Endothelial cell of umbilical vein (primary cell): ENCODE measurements at regions of chr4 and their contacts with region 1.

Region 1: GRCh38 chr4:51842554-51843308 is at the start of gene DCUN1D4:
- DNase-seq: peak; percentile 100
- H3K4me3 ChIP-seq: peak within 1 kb of the TSS; percentile 61 to 91 (median 84)
- H3K27ac ChIP-seq: peak within 1 kb of the TSS; percentile 22
- H3K4me1 ChIP-seq: peaks cover 9% of the 10 kb centered on the region
- H3K27me3 ChIP-seq: no peaks in the 10 kb centered on the region
- CTCF ChIP-seq: peak in 1 of 2 donors; percentile 43
- POLR2A ChIP-seq: no peak
- total RNA-seq, gene DCUN1D4: 50.2 and 50.6 TPM in 2 replicates

Region 2: DNA sequence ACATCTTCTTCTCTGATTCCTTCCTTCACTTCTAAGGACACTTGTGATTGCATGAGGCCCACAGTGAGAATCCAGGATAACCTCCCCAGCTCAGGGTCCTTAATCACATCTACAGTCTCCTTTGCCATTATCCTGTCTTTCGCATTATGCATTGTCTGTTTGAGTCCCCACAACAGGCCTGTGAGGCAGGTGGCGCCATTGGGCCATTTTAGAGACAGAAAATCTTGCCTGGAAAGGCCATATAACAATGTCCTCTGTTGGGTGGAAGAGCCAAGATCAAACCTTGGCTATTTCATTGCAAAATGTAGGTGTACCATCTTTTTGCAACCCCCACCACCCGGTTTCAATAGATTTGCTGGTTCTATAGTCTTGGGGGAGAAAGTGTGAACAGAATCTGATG is 11.6 kb before region 1 on chr4:
- CTCF ChIA-PET with region 1: interaction called, 13 read pairs
- POLR2A ChIA-PET with region 1: no interaction called
- dilution Hi-C with region 1: no loop called
- intact Hi-C with region 1: no loop called
- DNase-seq: peak; percentile 60
- H3K4me3 ChIP-seq: no peak overlapping the region
- H3K27ac ChIP-seq: no peak overlapping the region
- H3K4me1 ChIP-seq: no peaks in the 10 kb centered on the region
- H3K27me3 ChIP-seq: peaks cover 13% of the 10 kb centered on the region in 2 experiments
- CTCF ChIP-seq: peak; percentile 54 to 62
- POLR2A ChIP-seq: no peak

Region 3: DNA sequence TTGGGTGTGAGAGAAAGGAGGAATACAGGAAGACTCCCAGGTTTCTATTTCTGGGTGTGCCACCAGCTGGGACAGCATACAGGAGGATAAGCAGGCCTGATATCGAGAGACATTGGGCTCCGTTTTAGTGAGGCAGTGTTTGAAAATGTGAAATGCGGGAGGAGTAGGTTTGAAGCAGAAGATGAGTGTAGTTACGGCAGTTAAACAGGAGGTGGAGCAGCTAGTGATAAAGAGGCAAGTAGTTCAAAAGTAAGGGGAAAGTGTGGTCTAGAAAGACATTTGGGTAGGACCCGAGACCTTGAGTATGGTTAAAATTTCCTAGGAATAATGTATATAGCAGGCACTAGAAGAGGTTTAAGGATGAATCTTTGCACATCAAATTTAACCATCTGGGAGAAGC is 42.6 kb after region 1 on chr4:
- CTCF ChIA-PET with region 1: interaction called, 12 read pairs
- POLR2A ChIA-PET with region 1: no interaction called
- dilution Hi-C with region 1: no loop called
- intact Hi-C with region 1: no loop called
- DNase-seq: peak; percentile 40
- H3K4me3 ChIP-seq: no peak overlapping the region
- H3K27ac ChIP-seq: no peak overlapping the region
- H3K4me1 ChIP-seq: no peaks in the 10 kb centered on the region
- H3K27me3 ChIP-seq: no peaks in the 10 kb centered on the region
- CTCF ChIP-seq: peak; percentile 40 to 44
- POLR2A ChIP-seq: no peak

Region 4: DNA sequence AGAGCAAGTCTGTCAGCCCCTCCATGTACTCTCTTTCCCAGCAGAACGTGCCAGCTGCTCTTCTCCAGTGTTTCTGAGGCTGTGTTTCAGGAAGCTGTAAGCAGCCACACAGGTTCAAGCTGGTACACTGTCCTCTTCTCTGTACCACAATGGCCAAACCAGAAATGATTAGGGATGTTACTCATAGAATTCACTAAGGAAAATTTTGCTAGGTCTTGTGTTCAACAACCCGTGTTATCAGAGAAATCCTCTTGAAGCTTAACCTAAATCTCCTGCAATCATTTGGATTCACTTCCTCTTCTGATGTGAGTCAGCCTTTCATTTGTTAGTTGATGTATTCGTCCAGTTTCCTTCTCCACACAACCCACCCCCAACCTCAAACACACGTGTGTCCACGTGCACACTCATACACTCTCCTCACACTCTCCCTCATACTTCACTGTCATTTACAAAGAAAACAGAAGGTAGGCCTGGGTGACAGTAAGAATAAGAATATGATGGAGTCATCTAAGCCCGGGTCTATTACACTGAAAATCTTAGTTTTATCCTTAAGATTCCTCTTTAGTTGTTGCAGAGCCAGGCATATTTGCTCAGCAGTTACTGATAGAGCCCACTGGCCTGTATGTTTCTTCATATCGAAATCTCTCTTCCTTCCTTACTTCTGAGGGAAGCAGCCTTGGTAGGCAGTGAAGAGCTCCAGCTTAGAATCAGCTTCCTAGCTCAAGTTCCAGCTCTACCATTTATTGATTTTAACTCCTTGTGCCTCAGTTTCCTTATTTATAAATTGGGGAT is 63.6 kb after region 1 on chr4:
- CTCF ChIA-PET with region 1: interaction called, 3 read pairs
- POLR2A ChIA-PET with region 1: interaction called, 3 read pairs
- dilution Hi-C with region 1: no loop called
- intact Hi-C with region 1: loop called (anchors 2 kb)
- DNase-seq: peak; percentile 87
- H3K4me3 ChIP-seq: no peak overlapping the region
- H3K27ac ChIP-seq: peak overlapping the region; percentile 62
- H3K4me1 ChIP-seq: peaks cover 27% of the 10 kb centered on the region
- H3K27me3 ChIP-seq: no peaks in the 10 kb centered on the region
- CTCF ChIP-seq: no peak
- POLR2A ChIP-seq: peak; percentile 12